Prostate gland (tissue), 2 donors: ENCODE measurements at regions of chr9 and their contacts with region 1.

Region 1: DNA sequence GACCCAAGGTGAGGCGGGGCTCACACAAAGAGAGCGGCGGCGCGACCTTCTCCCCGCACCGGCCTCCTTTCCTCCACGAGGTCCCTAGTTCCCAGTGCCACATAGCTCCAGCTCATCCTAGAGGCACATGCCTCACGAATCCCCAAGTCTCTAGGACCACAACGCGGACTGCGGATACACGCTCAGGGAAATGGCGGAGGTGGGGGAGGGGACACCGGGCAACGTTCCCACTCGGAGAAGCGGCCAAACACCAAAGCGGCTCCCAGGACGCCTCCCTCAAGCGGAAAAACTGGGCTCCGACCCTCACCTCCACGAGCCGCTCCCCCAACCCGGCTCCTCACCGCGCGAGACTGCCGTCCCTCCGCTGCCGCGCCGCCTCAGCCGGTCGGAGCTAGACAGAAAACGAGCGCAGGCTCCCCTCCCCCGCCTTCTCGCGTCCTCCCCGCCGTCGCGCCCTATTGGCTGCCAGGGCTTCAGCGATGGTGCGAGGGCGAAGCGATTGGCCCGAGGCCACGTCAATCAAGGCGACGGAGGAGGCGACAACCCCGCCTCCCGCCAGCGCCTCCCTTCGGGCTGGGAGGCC is at the start of gene HNRNPK:
- DNase-seq: peak; percentile 98
- H3K4me3 ChIP-seq: peak within 1 kb of the TSS; percentile 95 to 96
- H3K27ac ChIP-seq: peak within 1 kb of the TSS; percentile 99
- H3K4me1 ChIP-seq: no peaks in the 10 kb centered on the region
- H3K27me3 ChIP-seq: no peaks in the 10 kb centered on the region
- CTCF ChIP-seq: no peak
- POLR2A ChIP-seq: peak; percentile 56
- total RNA-seq, gene HNRNPK: 447 to 480 TPM

Region 2: DNA sequence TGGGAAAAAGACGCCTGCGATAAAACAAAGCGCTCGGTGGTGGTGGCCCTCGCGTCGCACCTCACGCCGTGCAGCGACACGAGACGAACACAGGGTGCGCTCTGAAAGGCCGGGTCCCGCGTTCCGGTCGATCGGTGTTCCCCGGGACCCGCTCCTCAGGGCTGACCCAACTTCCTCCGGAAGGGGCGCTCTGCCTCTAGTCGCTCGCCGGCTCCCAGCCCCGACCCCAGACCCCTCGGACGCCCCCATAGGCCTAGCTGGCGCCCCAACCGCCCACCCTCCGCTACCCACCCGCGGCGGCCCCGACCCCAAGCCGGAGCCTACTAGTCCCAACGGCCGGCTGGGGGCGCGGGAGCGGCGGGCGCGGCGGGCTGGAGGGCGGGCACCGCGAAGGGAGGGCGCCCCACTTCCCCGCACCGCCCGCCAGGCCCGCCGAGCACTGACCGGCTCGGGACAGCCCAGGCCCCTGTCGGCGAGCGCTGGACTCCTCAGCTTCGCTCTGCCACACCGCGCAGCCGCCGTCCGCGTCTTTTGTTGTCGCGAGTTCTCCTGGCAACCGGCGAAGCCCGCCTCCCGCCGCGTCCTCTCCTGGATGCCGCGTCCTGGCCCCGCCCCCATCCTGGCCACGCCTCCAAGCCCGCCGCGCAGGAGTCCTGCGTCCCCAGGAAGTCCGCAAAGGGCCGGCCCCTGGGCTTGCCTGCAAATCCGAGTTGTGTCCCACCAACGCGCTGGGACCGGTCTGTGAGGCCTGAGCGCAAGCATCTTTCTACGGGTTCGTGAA is 58.8 kb before region 1 on chr9 and contains the start of gene KIF27:
- intact Hi-C with region 1: loop called (anchors 2 kb)
- DNase-seq: peak; percentile 98
- H3K4me3 ChIP-seq: peak within 1 kb of the TSS; percentile 89 to 95
- H3K27ac ChIP-seq: peak within 1 kb of the TSS; percentile 95 to 96
- H3K4me1 ChIP-seq: no peaks in the 10 kb centered on the region
- H3K27me3 ChIP-seq: no peaks in the 10 kb centered on the region
- CTCF ChIP-seq: peak in 3 of 4 experiments; percentile 36 to 69 (median 66)
- POLR2A ChIP-seq: peak; percentile 83
- total RNA-seq, gene KIF27: 3.4 to 11.2 TPM

Region 3: GRCh38 chr9:83956434-83957247 is 23.3 kb before region 1 on chr9:
- intact Hi-C with region 1: loop called (anchors 2 kb)
- DNase-seq: peak; percentile 59
- H3K4me3 ChIP-seq: peak overlapping the region; percentile 54 to 62
- H3K27ac ChIP-seq: peak overlapping the region; percentile 73 to 84
- H3K4me1 ChIP-seq: peaks cover 4% of the 10 kb centered on the region
- H3K27me3 ChIP-seq: no peaks in the 10 kb centered on the region
- CTCF ChIP-seq: no peak
- POLR2A ChIP-seq: peak; percentile 27

Region 4: DNA sequence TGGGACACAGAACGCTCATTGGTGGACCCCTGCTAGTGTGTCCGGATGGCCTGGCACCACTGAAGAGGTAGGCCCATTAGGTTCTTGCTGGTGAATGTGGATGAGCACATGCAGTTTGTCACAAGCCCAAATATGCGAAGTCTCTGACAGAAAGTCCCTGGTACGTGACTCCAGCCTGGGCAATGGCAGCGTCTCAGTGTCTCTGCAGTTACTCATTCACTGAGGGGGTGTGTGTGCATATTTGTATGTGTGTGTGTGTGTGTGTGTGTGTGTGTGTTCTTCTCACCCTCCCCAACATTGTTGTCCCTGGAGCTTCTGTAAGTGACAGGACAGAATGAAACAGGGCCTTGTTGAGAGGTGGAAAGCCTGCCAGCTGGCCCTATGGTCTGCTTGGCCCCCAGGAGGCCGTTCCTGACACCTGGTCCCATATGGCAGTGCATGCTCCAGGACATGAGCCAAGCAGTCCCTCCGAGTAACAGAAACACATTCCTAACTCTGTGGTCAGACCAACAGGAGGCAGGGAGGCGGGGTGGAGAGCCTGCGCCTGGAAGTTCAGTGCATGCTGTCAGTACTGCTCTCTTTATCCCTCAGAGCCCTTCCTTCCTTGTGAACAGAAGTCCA is 190.7 kb after region 1 on chr9:
- intact Hi-C with region 1: loop called (anchors 2 kb)
- DNase-seq: peak; percentile 18
- H3K4me3 ChIP-seq: no peak overlapping the region
- H3K27ac ChIP-seq: no peak overlapping the region
- H3K4me1 ChIP-seq: no peaks in the 10 kb centered on the region
- H3K27me3 ChIP-seq: no peaks in the 10 kb centered on the region
- CTCF ChIP-seq: no peak
- POLR2A ChIP-seq: no peak

Region 5: GRCh38 chr9:84207491-84207951 is 227.6 kb after region 1 on chr9:
- intact Hi-C with region 1: no loop called
- DNase-seq: no peak
- H3K4me3 ChIP-seq: no peak overlapping the region
- H3K27ac ChIP-seq: no peak overlapping the region
- H3K4me1 ChIP-seq: no peaks in the 10 kb centered on the region
- H3K27me3 ChIP-seq: no peaks in the 10 kb centered on the region
- CTCF ChIP-seq: no peak
- POLR2A ChIP-seq: no peak